Heart left ventricle (tissue), 16 donors: ENCODE measurements at regions of chr22 and their contacts with region 1.

Region 1: GRCh38 chr22:36775964-36776669 is at the start of gene IFT27:
- DNase-seq: peak; percentile 96 to 99 (median 99)
- ATAC-seq: peak; percentile 98 to 99 (median 98)
- H3K4me3 ChIP-seq: peak within 1 kb of the TSS; percentile 40 to 98 (median 84)
- H3K27ac ChIP-seq: peak within 1 kb of the TSS; percentile 25 to 92 (median 84)
- H3K4me1 ChIP-seq: peaks cover 0 to 18% (median 11%) of the 10 kb centered on the region in 12 donors
- H3K27me3 ChIP-seq: no peaks in the 10 kb centered on the region
- CTCF ChIP-seq: no peak
- POLR2A ChIP-seq: peak in 1 of 2 donors; percentile 62
- total RNA-seq, gene IFT27: 18.9 to 33.8 (median 25.8) TPM

Region 2: GRCh38 chr22:36532466-36532865 is 243.7 kb before region 1 on chr22:
- intact Hi-C with region 1: loop called in 1 of 10 experiments (anchors 5 kb)
- DNase-seq: no peak
- ATAC-seq: no peak
- H3K4me3 ChIP-seq: no peak overlapping the region
- H3K27ac ChIP-seq: no peak overlapping the region
- H3K4me1 ChIP-seq: peaks cover 0 to 16% (median 12%) of the 10 kb centered on the region in 12 donors
- H3K27me3 ChIP-seq: peaks cover 0 to 9% (median 0%) of the 10 kb centered on the region in 9 donors
- CTCF ChIP-seq: no peak
- POLR2A ChIP-seq: no peak

Region 3: GRCh38 chr22:36839356-36840073 is 63.4 kb after region 1 on chr22:
- intact Hi-C with region 1: no loop called
- DNase-seq: no peak
- ATAC-seq: no peak
- H3K4me3 ChIP-seq: no peak overlapping the region
- H3K27ac ChIP-seq: no peak overlapping the region
- H3K4me1 ChIP-seq: no peaks in the 10 kb centered on the region
- H3K27me3 ChIP-seq: peaks cover 0 to 39% (median 4%) of the 10 kb centered on the region in 9 donors
- CTCF ChIP-seq: no peak
- POLR2A ChIP-seq: no peak